ENCODE measurements at regions of chr1 and their contacts with region 1.

Region 1: GRCh38 chr1:179882243-179883039 is at the start of gene TOR1AIP1:
- DNase-seq: peak; percentile 95 to 97
- ATAC-seq: peak; percentile 86 to 90
- H3K4me3 ChIP-seq: peak within 1 kb of the TSS; percentile 64 to 97 (median 90)
- H3K27ac ChIP-seq: peak within 1 kb of the TSS; percentile 92 to 99 (median 97)
- H3K4me1 ChIP-seq: peaks cover 49 to 51% of the 10 kb centered on the region in 2 donors
- H3K27me3 ChIP-seq: no peaks in the 10 kb centered on the region
- CTCF ChIP-seq: peak; percentile 61 to 75 (median 65)
- POLR2A ChIP-seq: peak; percentile 88 to 95
- total RNA-seq, gene TOR1AIP1: 66.1 to 148 (median 68.8) TPM

Region 2: DNA sequence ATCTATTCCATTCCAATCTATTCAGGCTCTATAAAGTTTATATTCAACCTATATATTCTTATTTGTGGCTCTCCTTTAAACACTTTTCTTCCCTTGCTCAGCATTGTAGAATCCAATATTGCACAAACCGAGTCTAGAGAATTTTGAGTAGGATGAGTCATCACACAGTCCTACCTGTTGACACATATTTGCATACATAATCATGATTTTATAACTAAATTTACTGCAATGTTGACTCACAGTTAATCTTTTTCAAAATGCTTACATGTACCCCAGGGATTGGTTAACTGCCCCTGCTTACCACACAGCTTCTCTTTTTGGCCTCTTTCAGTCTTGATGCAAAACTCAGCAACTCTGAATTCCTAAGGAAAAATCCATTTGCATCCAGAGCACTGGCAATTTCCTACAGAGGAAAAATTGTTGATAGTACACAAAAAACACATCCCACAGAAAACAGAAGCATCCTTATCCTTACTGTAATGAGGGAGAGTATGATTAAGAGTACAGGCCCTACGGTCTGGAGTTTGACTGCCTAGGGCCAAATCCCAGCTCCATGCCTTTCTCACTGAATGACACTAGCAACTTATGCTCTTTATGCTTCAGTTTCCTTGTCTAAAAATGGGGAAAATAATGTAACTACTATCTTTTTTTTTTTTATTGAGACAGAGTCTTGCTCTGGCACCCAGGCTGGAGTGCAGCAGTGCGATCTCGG is 44.2 kb after region 1 on chr1:
- in situ Hi-C with region 1: no loop called
- intact Hi-C with region 1: no loop called
- DNase-seq: no peak
- ATAC-seq: no peak
- H3K4me3 ChIP-seq: no peak overlapping the region
- H3K27ac ChIP-seq: no peak overlapping the region
- H3K4me1 ChIP-seq: no peaks in the 10 kb centered on the region
- H3K27me3 ChIP-seq: no peaks in the 10 kb centered on the region
- CTCF ChIP-seq: no peak
- POLR2A ChIP-seq: no peak

Region 3: GRCh38 chr1:179954493-179955297 is 72.3 kb after region 1 on chr1 and contains the start of gene CEP350:
- in situ Hi-C with region 1: loop called in 1 of 4 experiments (anchors 10 kb)
- intact Hi-C with region 1: loop called (anchors 1 kb)
- DNase-seq: peak; percentile 97 to 98
- ATAC-seq: peak; percentile 93 to 94
- H3K4me3 ChIP-seq: peak within 1 kb of the TSS; percentile 75 to 97 (median 92)
- H3K27ac ChIP-seq: peak within 1 kb of the TSS; percentile 93 to 98 (median 97)
- H3K4me1 ChIP-seq: peaks cover 17 to 38% of the 10 kb centered on the region in 2 donors
- H3K27me3 ChIP-seq: no peaks in the 10 kb centered on the region
- CTCF ChIP-seq: peak in 2 of 5 experiments; percentile 13 to 19
- POLR2A ChIP-seq: peak; percentile 87 to 92
- total RNA-seq, gene CEP350: 83.7 to 197 (median 157) TPM

Region 4: GRCh38 chr1:179973198-179974110 is 91.0 kb after region 1 on chr1:
- in situ Hi-C with region 1: loop called in 1 of 4 experiments (anchors 5 kb)
- intact Hi-C with region 1: loop called (anchors 5 kb)
- DNase-seq: no peak
- ATAC-seq: no peak
- H3K4me3 ChIP-seq: peak overlapping the region in 3 of 4 donors; percentile 25 to 38 (median 30)
- H3K27ac ChIP-seq: peak overlapping the region; percentile 79 to 89 (median 87)
- H3K4me1 ChIP-seq: peaks cover 60 to 75% of the 10 kb centered on the region in 2 donors
- H3K27me3 ChIP-seq: no peaks in the 10 kb centered on the region
- CTCF ChIP-seq: no peak
- POLR2A ChIP-seq: no peak

Region 5: GRCh38 chr1:180154325-180155181 is 272.1 kb after region 1 on chr1 and contains the start of gene QSOX1:
- in situ Hi-C with region 1: loop called in 1 of 4 experiments (anchors 25 kb)
- intact Hi-C with region 1: loop called (anchors 2 kb)
- DNase-seq: peak; percentile 83 to 87
- ATAC-seq: peak; percentile 86 to 89
- H3K4me3 ChIP-seq: peak within 1 kb of the TSS; percentile 69 to 100 (median 84)
- H3K27ac ChIP-seq: peak within 1 kb of the TSS; percentile 86 to 98 (median 91)
- H3K4me1 ChIP-seq: peaks cover 29 to 34% of the 10 kb centered on the region in 2 donors
- H3K27me3 ChIP-seq: no peaks in the 10 kb centered on the region
- CTCF ChIP-seq: peak in 3 of 5 experiments; percentile 18 to 64 (median 29)
- POLR2A ChIP-seq: peak; percentile 94
- total RNA-seq, gene QSOX1: 65.9 to 124 (median 93.7) TPM

Region 6: GRCh38 chr1:180168786-180169639 is 286.6 kb after region 1 on chr1:
- in situ Hi-C with region 1: loop called in 2 of 4 experiments (anchors 10 to 25 kb)
- intact Hi-C with region 1: loop called (anchors 1 kb)
- DNase-seq: peak in 1 of 2 donors; percentile 78
- ATAC-seq: peak; percentile 16 to 24
- H3K4me3 ChIP-seq: no peak overlapping the region
- H3K27ac ChIP-seq: peak overlapping the region; percentile 89 to 97 (median 96)
- H3K4me1 ChIP-seq: peaks cover 54 to 60% of the 10 kb centered on the region in 2 donors
- H3K27me3 ChIP-seq: no peaks in the 10 kb centered on the region
- CTCF ChIP-seq: peak; percentile 44 to 61 (median 49)
- POLR2A ChIP-seq: no peak